H1 (cell line): ENCODE measurements at regions of chr7 and their contacts with region 1.

Region 1: DNA sequence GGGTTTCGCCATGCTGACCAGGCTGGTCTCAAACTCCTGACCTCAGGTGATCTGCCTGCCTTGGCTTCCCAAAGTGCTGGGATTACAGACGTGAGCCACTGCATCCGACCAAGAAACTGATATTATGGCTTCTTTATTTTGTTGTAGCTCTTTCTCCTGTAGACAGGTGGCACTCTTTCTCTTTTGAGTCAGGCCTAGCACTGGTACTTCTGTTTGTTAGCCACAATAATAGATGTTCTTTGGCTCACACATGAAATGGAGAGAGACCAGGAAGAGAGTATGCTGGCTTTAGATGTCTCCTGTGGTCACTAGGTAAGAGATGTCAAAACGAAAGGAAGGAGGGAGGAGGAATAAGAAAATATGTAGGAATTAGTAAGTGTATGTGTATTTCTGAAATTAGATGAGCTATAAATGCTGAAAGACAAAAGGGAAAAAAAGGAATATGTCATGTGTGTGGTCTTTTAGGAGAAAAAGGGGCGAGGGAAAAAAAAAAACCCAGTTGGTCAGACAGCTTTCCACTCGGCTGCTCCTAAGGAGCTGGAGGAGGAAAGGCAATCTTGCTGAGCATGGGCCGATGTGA is 78.7 kb downstream of the CLEC2L start:
- DNase-seq: no peak
- H3K4me3 ChIP-seq: no peak overlapping the region
- H3K27ac ChIP-seq: no peak overlapping the region
- H3K4me1 ChIP-seq: no peaks in the 10 kb centered on the region
- H3K27me3 ChIP-seq: no peaks in the 10 kb centered on the region
- CTCF ChIP-seq: peak in 2 of 3 experiments; percentile 55 to 62; a peak in 3 of 4 replicates
- EP300 ChIP-seq: no peak
- POLR2A ChIP-seq: no peak
- RAD21 ChIP-seq: peak; percentile 70

Region 2: GRCh38 chr7:139582671-139583155 is 19.5 kb before region 1 on chr7:
- CTCF ChIA-PET with region 1: interaction called, 51 read pairs
- POLR2A ChIA-PET with region 1: no interaction called
- DNase-seq: no peak
- H3K4me3 ChIP-seq: no peak overlapping the region
- H3K27ac ChIP-seq: no peak overlapping the region
- H3K4me1 ChIP-seq: no peaks in the 10 kb centered on the region
- H3K27me3 ChIP-seq: no peaks in the 10 kb centered on the region
- CTCF ChIP-seq: no peak
- EP300 ChIP-seq: no peak
- POLR2A ChIP-seq: no peak
- RAD21 ChIP-seq: no peak

Region 3: GRCh38 chr7:139588632-139589031 is 13.6 kb before region 1 on chr7:
- CTCF ChIA-PET with region 1: interaction called, 51 read pairs
- POLR2A ChIA-PET with region 1: interaction called, 5 read pairs
- DNase-seq: peak in 1 of 2 experiments; percentile 41
- H3K4me3 ChIP-seq: no peak overlapping the region
- H3K27ac ChIP-seq: no peak overlapping the region
- H3K4me1 ChIP-seq: no peaks in the 10 kb centered on the region; a peak in 1 of 7 replicates
- H3K27me3 ChIP-seq: no peaks in the 10 kb centered on the region
- CTCF ChIP-seq: no peak
- EP300 ChIP-seq: no peak
- POLR2A ChIP-seq: no peak
- RAD21 ChIP-seq: no peak

Region 4: GRCh38 chr7:139613971-139614411 is 11.8 kb after region 1 on chr7:
- CTCF ChIA-PET with region 1: interaction called, 55 read pairs
- POLR2A ChIA-PET with region 1: interaction called, 6 read pairs
- DNase-seq: peak; percentile 9 to 54
- H3K4me3 ChIP-seq: no peak overlapping the region; a peak in 1 of 8 replicates
- H3K27ac ChIP-seq: no peak overlapping the region
- H3K4me1 ChIP-seq: peaks cover 3 to 15% (median 7%) of the 10 kb centered on the region in 4 experiments; a peak in 6 of 7 replicates
- H3K27me3 ChIP-seq: no peaks in the 10 kb centered on the region
- CTCF ChIP-seq: peak in 1 of 3 experiments; percentile 12; a peak in 1 of 4 replicates
- EP300 ChIP-seq: no peak
- POLR2A ChIP-seq: no peak
- RAD21 ChIP-seq: peak in 1 of 2 experiments; percentile 15; a peak in 2 of 4 replicates

Region 5: GRCh38 chr7:139620676-139621344 is 18.6 kb after region 1 on chr7:
- CTCF ChIA-PET with region 1: interaction called, 55 read pairs
- POLR2A ChIA-PET with region 1: no interaction called
- DNase-seq: peak in 1 of 2 experiments; percentile 93
- H3K4me3 ChIP-seq: no peak overlapping the region
- H3K27ac ChIP-seq: no peak overlapping the region
- H3K4me1 ChIP-seq: no peaks in the 10 kb centered on the region; a peak in 1 of 7 replicates
- H3K27me3 ChIP-seq: no peaks in the 10 kb centered on the region
- CTCF ChIP-seq: peak; percentile 88 to 90 (median 90)
- EP300 ChIP-seq: no peak
- POLR2A ChIP-seq: no peak
- RAD21 ChIP-seq: peak; percentile 90 to 93

Region 6: DNA sequence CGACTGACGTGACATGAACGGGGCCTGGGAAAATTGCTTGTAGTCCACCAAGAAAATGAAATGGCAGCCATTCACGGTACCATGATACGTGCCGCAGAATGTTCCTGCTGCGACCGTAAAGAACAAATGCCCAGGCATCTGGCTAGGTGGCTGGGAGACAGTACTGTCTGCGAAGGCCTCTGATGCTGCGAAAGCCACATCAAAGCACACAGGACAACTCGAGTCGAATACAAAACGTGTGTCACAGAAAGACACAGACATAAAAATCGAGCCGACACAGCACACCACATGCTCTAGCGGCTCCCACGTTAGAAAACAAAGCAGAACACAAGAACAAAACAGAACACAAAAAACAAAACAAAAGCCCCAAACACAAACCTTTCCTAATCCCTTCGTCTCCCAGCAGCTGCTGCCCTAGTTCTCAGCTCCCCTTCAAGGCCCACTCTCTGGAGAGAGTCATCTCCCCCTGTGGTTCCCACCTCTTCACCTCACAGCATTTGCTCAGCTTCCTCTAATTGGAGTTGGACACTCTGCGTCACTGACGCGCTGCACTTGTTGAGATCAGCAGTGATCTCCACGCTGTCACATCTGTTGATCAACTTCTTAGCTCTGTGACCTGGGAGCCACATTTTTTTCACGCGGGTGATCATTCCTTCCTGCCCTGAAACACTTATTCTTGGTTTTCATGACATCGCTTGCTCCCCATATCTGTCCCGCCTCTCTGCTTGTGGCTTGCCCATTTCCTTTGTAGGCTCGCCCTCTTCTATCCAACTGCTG is 33.5 kb after region 1 on chr7:
- CTCF ChIA-PET with region 1: interaction called, 10 read pairs
- POLR2A ChIA-PET with region 1: no interaction called
- DNase-seq: no peak
- H3K4me3 ChIP-seq: no peak overlapping the region
- H3K27ac ChIP-seq: no peak overlapping the region
- H3K4me1 ChIP-seq: peaks cover 0 to 3% (median 0%) of the 10 kb centered on the region in 4 experiments; a peak in 3 of 7 replicates
- H3K27me3 ChIP-seq: no peaks in the 10 kb centered on the region
- CTCF ChIP-seq: no peak
- EP300 ChIP-seq: no peak
- POLR2A ChIP-seq: no peak
- RAD21 ChIP-seq: no peak

Region 7: GRCh38 chr7:139682136-139683013 is 80.1 kb after region 1 on chr7:
- CTCF ChIA-PET with region 1: no interaction called
- POLR2A ChIA-PET with region 1: no interaction called
- DNase-seq: no peak
- H3K4me3 ChIP-seq: no peak overlapping the region
- H3K27ac ChIP-seq: no peak overlapping the region
- H3K4me1 ChIP-seq: peaks cover 2 to 13% (median 9%) of the 10 kb centered on the region in 4 experiments; a peak in 6 of 7 replicates
- H3K27me3 ChIP-seq: no peaks in the 10 kb centered on the region
- CTCF ChIP-seq: no peak
- EP300 ChIP-seq: no peak
- POLR2A ChIP-seq: no peak
- RAD21 ChIP-seq: no peak